ENCODE measurements at regions of chr5 and their contacts with region 1.

Region 1: GRCh38 chr5:80654391-80655230 is at the starts of genes DHFR and MSH3:
- H3K4me3 Mint-ChIP-seq: peak within 1 kb of the TSS; percentile 72
- H3K27ac Mint-ChIP-seq: peak within 1 kb of the TSS; percentile 90
- H3K4me1 Mint-ChIP-seq: peaks cover 24% of the 10 kb centered on the region
- H3K27me3 Mint-ChIP-seq: no peaks in the 10 kb centered on the region

Region 2: DNA sequence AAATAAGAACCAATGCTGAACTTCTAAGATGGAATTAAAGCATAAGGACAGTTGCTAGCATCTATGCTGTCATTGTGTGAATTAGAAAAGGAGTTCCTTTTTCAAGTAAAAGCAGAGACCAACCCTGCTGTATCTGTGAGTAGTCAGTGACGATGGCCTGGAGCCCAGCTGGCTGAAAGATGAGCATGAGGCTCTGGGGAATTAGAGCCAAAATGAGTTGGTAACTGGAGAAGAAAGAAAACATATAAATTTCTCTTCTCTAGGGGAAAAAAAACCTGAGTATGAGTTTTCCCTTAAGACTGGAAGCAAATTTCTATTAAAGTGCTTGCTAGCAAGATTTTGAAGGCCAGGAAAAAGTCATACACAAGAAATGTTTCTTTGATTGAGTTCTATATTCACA is 336.4 kb before region 1 on chr5:
- intact Hi-C with region 1: no loop called
- H3K4me3 Mint-ChIP-seq: no peak overlapping the region
- H3K27ac Mint-ChIP-seq: no peak overlapping the region
- H3K4me1 Mint-ChIP-seq: no peaks in the 10 kb centered on the region
- H3K27me3 Mint-ChIP-seq: peaks cover 26% of the 10 kb centered on the region

Region 3: DNA sequence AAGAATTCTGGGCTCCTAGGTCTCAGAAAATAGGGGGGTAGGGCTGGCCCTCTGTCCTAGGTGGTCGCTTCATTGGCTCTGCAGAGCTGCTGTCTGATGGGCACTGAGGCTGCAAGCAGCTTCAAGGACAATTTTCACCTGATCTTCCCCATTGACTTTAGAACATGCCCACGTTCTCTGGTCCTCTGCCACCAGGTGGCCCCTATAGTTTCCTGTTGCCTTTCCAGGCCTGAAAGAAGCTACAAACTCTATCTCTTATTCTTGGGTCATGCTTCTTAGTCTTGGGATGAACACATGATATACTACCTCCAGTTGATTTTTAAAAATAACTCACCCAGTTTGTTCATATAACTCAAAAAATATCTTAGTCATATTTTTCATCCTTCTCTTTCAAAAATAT is 308.6 kb before region 1 on chr5:
- intact Hi-C with region 1: loop called (anchors 10 kb)
- H3K4me3 Mint-ChIP-seq: no peak overlapping the region
- H3K27ac Mint-ChIP-seq: no peak overlapping the region
- H3K4me1 Mint-ChIP-seq: peaks cover 24% of the 10 kb centered on the region
- H3K27me3 Mint-ChIP-seq: peaks cover 8% of the 10 kb centered on the region

Region 4: GRCh38 chr5:80487829-80488721 is 166.5 kb before region 1 on chr5 and contains the start of gene FAM151B:
- intact Hi-C with region 1: loop called (anchors 1 kb)
- H3K4me3 Mint-ChIP-seq: peak within 1 kb of the TSS; percentile 84
- H3K27ac Mint-ChIP-seq: peak within 1 kb of the TSS; percentile 84
- H3K4me1 Mint-ChIP-seq: peaks cover 28% of the 10 kb centered on the region
- H3K27me3 Mint-ChIP-seq: no peaks in the 10 kb centered on the region

Region 5: GRCh38 chr5:80629281-80629680 is 25.3 kb before region 1 on chr5:
- intact Hi-C with region 1: no loop called
- H3K4me3 Mint-ChIP-seq: no peak overlapping the region
- H3K27ac Mint-ChIP-seq: peak overlapping the region; percentile 63
- H3K4me1 Mint-ChIP-seq: peaks cover 12% of the 10 kb centered on the region
- H3K27me3 Mint-ChIP-seq: no peaks in the 10 kb centered on the region

Measured in dendritic cell treated with granulocyte-macrophage colony-stimulating factor and Interleukin-4, amounts not matched to agents 40 ng/mL and 50 ng/mL, for 4 days (primary cell).